Right ventricle myocardium inferior (tissue), 1 donor: ENCODE measurements at regions of chr9 and their contacts with region 1.

Region 1: DNA sequence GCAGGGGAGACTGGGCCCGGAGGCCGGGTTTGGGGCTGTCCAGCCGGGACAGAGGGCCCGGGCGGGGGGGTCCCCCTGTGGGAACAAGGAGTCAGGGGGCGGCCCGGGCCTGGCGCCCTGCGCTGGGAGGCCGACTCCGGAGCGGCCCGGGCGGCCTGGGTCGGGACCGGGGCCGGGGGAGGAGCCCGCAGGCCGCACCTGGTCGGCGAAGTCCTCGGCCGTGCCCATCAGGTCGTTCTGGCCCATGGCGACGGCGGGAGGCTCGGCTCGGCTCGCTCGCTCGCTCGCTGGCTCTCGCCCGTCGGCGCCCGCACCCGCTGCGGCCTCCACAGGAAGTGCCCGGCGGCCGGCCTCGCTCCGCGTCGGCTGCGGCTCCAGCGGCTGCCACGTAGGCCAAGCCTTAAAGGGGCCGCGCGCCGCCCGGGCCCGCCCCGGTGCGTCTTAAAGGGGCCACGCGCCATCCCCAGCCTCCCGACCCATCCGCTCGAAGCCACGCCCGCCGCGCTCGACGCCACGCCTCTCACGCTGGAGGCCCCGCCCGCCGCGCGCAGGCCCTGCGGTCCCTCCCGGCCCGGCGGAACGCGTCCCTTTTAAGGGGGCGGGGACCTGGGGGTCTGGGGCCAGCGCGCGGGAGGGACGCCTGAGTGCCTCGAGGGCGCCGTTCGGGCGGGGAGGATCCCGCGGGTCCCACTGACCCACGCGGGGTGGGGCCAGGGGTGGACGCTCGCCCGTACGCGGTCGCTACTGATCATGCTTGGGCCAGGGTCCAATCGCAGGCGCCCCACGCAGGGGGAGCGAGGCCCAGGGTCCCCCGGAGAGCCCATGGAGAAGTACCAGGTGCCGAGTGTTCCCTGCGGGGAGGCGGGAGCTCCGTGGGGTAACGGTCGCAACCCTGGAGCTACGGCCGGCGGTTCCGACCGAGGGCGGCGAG is at the starts of genes STKLD1 and SURF4:
- DNase-seq: peak; percentile 99
- ATAC-seq: peak; percentile 99
- total RNA-seq, gene STKLD1: 0.27 TPM
- total RNA-seq, gene SURF4: 68.4 TPM

Region 2: DNA sequence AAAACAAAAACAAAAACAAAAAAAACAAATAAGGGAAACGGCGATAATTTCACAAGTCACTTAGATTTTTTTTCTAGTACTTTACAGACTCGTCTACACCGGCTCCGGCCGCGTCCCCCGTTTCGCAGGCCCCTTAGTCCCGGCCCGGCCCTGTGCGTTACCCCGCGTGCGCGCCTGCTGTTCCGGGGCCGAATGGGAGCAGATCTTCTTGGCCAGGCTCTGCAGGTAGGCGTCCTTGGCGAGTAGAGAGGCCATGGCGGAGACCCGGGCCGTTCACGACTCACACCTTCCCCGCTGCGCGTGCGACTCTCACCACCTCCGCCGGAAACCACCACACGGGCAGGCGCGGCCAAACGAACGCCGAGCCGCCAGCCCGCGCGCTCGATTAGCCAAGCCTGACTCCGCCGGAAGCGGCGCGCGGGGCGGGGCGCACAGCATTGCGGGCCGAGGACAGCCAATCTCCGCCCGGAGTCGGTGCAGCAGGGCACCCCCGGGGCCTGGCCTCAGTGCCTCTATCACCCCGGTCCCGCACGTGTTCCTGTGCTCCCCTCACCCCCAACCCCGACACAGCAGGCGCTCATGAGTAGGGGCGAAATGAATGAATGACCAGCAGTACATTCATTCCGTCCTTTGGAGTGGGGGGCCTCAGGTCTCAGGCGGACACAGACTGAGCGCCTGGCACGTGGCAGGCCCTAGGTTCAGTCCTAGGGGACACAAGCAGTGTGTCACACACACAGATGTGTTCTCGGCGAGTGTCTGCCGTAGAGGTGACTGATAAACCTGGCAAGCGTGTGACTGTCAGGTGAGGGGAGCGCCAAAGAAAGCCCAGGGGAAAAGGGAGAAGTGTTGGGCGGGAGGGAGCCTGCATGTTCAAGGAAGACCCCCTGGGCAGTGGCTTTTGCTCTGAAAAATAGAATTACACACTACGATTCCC is 39.8 kb before region 1 on chr9 and contains the start of gene SURF6:
- intact Hi-C with region 1: loop called (anchors 5 kb)
- DNase-seq: peak; percentile 97
- ATAC-seq: peak; percentile 94
- total RNA-seq, gene SURF6: 13.4 TPM

Region 3: DNA sequence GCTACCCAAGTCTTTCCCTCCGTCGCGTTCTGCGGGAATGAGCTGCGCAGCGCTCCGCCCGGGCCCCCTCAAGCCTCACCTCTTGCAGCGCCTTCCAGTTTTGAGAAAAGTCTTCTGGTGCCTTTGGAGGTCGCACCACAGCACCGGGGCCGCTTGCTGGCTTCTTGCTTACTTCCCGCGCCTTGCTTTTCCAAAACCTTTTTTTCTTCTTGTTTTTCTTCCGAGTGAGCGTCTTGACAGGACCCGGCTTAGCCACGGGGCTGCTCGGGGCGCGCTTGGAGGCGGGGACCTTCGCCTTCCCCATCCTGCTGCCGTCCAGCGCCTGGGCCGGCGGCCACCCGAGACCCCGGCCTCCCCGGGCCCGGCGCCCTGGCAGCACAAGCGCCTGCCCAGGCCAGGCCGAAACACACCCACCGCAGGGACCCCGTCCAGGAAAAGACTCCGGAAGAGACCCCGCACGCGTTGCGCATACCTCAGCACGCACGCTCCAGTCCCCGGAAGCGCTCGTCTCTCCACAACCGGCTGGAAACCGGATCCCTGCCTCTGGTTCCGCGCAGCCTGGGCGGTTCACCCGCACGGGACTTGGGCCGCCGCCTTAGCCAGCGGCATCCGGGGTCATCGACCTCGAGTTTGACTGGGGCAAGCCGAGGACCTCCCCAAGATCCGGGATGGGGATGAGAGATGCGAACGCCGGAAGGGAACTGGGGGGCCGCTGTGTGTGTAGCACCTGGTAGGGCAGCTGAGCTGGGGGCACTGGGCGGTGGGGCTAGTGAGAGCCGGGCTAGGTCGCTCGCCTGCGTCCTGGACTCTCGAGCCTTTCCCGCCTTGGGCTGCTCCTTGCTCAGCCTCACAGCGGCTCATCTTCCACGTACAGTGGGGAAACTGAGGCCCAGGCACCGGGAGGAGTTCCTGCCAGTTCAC is 41.8 kb after region 1 on chr9 and contains the start of gene REXO4:
- intact Hi-C with region 1: loop called (anchors 5 kb)
- DNase-seq: peak; percentile 92
- ATAC-seq: peak; percentile 97
- total RNA-seq, gene REXO4: 18.7 TPM